ENCODE measurements at regions of chr3 and their contacts with region 1.

Region 1: GRCh38 chr3:45730409-45731154 is 41.4 kb downstream of the SACM1L start:
- DNase-seq: no peak
- ATAC-seq: no peak
- H3K4me3 ChIP-seq: no peak overlapping the region
- H3K4me3 Mint-ChIP-seq: no peak overlapping the region
- H3K27ac ChIP-seq: no peak overlapping the region
- H3K27ac Mint-ChIP-seq: peak overlapping the region; percentile 60
- H3K4me1 ChIP-seq: no peaks in the 10 kb centered on the region
- H3K4me1 Mint-ChIP-seq: peaks cover 19% of the 10 kb centered on the region
- H3K27me3 ChIP-seq: no peaks in the 10 kb centered on the region
- H3K27me3 Mint-ChIP-seq: no peaks in the 10 kb centered on the region
- CTCF ChIP-seq: no peak

Region 2: DNA sequence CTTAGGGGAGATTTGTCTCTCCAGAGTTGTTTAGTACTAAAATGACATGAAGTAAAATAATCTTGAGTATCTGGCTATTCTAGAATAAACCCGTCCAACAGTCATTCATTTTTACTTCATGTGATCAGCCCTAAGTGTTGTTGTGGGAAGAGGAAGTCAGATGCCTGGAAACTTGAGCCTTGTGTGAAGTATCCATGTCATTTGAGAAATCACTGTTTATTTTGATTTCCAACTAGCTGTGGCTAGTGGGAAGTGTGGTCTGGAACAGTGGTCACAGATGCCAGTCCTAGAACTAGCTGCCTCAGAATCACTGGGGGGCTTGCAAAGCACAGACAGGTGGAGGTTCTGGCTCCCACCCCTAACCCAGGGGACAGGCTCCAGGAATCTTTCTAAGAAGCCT is 213.8 kb before region 1 on chr3:
- CTCF ChIA-PET with region 1: no interaction called
- POLR2A ChIA-PET with region 1: no interaction called
- intact Hi-C with region 1: loop called in 1 of 2 experiments (anchors 10 kb)
- DNase-seq: no peak
- ATAC-seq: no peak
- H3K4me3 ChIP-seq: no peak overlapping the region
- H3K4me3 Mint-ChIP-seq: no peak overlapping the region
- H3K27ac ChIP-seq: no peak overlapping the region
- H3K27ac Mint-ChIP-seq: no peak overlapping the region
- H3K4me1 ChIP-seq: no peaks in the 10 kb centered on the region
- H3K4me1 Mint-ChIP-seq: no peaks in the 10 kb centered on the region
- H3K27me3 ChIP-seq: no peaks in the 10 kb centered on the region
- H3K27me3 Mint-ChIP-seq: no peaks in the 10 kb centered on the region
- CTCF ChIP-seq: no peak

Region 3: GRCh38 chr3:45688882-45689756 is 41.5 kb before region 1 on chr3 and contains the start of gene SACM1L:
- CTCF ChIA-PET with region 1: no interaction called
- POLR2A ChIA-PET with region 1: no interaction called
- intact Hi-C with region 1: no loop called
- DNase-seq: peak; percentile 88 to 99 (median 94)
- ATAC-seq: peak; percentile 85
- H3K4me3 ChIP-seq: peak within 1 kb of the TSS; percentile 66 to 84
- H3K4me3 Mint-ChIP-seq: peak within 1 kb of the TSS; percentile 86
- H3K27ac ChIP-seq: peak within 1 kb of the TSS; percentile 89 to 94
- H3K27ac Mint-ChIP-seq: peak within 1 kb of the TSS; percentile 98
- H3K4me1 ChIP-seq: peaks cover 41% of the 10 kb centered on the region
- H3K4me1 Mint-ChIP-seq: peaks cover 60% of the 10 kb centered on the region
- H3K27me3 ChIP-seq: no peaks in the 10 kb centered on the region
- H3K27me3 Mint-ChIP-seq: peaks cover 3% of the 10 kb centered on the region
- CTCF ChIP-seq: no peak
- total RNA-seq, gene SACM1L: 54.4 to 56.7 TPM